ENCODE measurements at regions of chr20 and their contacts with region 1.

Region 1: DNA sequence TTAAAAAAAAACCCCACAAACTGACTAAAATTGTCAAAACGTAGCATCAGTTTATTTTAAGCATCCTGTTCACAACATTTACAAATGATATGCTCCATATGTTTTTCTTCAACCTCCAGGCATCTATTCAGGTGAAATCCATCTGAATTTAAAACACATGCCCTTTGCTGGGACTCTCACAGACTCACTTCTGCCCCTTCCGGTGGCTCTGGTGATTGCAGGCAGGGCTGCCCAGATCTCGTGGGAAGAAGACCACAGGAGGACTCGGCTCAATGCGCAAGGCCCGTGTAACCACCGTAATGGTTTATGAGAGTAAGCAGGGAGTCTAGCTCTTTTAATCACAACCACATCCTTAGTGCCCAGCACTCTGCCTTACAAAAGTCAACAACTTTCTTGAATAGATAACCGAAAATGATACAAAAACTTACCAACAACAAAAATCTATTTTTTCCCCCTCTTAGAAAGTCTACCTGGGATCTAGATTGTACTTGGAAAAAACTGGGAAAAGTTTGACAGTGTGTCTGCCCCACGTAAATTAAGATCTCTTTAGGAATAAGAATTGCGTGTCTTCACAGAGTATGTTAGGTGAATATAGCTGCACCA is 139.1 kb downstream of the KIF16B start:
- DNase-seq: peak; percentile 63
- ATAC-seq: peak; percentile 100
- H3K4me3 ChIP-seq: no peak overlapping the region
- H3K27ac ChIP-seq: no peak overlapping the region
- H3K4me1 ChIP-seq: no peaks in the 10 kb centered on the region
- H3K27me3 ChIP-seq: no peaks in the 10 kb centered on the region
- CTCF ChIP-seq: peak; percentile 65 to 87 (median 75)
- EP300 ChIP-seq: peak in 1 of 2 experiments; percentile 41; a peak in 1 of 4 replicates
- POLR2A ChIP-seq: no peak
- RAD21 ChIP-seq: peak; percentile 50

Region 2: DNA sequence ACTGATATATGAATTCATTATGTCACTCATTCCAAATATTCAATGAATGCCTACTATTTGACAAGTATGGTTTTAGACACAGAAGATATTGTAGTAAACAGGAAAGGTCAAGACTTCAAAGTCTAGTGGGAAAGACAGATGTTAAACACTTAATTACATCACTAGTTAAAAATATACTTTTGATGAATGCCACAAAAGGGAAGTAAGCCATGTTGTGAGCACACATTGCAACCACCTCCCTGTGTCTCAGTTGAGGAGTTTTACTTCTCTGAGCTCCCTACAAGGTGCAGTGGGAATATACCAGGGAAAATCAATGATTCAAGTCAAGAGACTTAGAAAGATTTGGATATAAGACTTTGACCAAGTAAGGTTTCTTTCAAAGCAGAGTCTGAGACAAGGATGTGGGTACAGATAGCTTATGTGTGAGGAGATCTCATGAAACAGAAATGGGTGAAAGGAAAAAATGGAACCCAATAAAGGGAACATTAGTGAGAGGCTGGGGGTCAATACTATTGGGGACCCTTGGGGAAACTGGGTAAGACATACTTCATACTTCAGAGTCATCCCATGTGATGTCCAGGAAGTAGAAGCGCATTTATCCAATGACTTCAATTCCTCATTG is 364.7 kb before region 1 on chr20:
- CTCF ChIA-PET with region 1: interaction called, 3 read pairs
- POLR2A ChIA-PET with region 1: no interaction called
- RAD21 ChIA-PET with region 1: no interaction called
- SMC1A ChIA-PET with region 1: no interaction called
- in situ Hi-C with region 1: no loop called
- intact Hi-C with region 1: loop called (anchors 10 kb)
- DNase-seq: peak; percentile 43
- ATAC-seq: peak; percentile 95
- H3K4me3 ChIP-seq: no peak overlapping the region
- H3K27ac ChIP-seq: no peak overlapping the region
- H3K4me1 ChIP-seq: no peaks in the 10 kb centered on the region; the same call in 1 of the 2 replicates
- H3K27me3 ChIP-seq: no peaks in the 10 kb centered on the region
- CTCF ChIP-seq: no peak
- EP300 ChIP-seq: peak; percentile 68 to 73; a peak in 2 of 4 replicates
- POLR2A ChIP-seq: no peak
- RAD21 ChIP-seq: no peak

Region 3: DNA sequence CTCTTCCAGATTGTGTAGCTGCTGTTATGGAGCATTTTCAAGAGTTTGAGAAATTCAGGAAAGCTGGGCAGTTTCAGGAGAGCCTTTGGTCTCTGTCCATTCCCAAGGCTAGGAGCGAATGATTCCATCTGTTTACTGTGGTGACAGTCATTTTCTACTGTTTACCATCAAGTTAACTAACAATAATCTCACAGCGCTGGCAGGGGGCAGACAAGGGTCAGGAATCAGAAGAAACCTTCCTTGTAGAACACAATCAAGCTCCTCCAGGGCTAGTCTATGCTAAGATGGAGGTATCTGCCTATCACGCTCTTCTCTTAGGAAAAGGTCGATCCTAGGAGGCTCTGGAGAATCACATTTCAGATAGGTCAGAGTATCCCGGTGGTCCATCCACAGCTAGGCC is 154.8 kb before region 1 on chr20:
- CTCF ChIA-PET with region 1: no interaction called
- POLR2A ChIA-PET with region 1: no interaction called
- RAD21 ChIA-PET with region 1: no interaction called
- SMC1A ChIA-PET with region 1: interaction called, 9 read pairs
- in situ Hi-C with region 1: no loop called
- intact Hi-C with region 1: loop called (anchors 5 kb)
- DNase-seq: no peak
- ATAC-seq: peak; percentile 46; the same call in 2 of the 3 replicates
- H3K4me3 ChIP-seq: no peak overlapping the region
- H3K27ac ChIP-seq: no peak overlapping the region
- H3K4me1 ChIP-seq: no peaks in the 10 kb centered on the region
- H3K27me3 ChIP-seq: no peaks in the 10 kb centered on the region
- CTCF ChIP-seq: peak in 2 of 3 experiments; percentile 17 to 41; a peak in 2 of 6 replicates
- EP300 ChIP-seq: no peak
- POLR2A ChIP-seq: no peak
- RAD21 ChIP-seq: peak; percentile 56

Region 4: GRCh38 chr20:16314320-16314719 is 119.8 kb before region 1 on chr20:
- CTCF ChIA-PET with region 1: no interaction called
- POLR2A ChIA-PET with region 1: no interaction called
- RAD21 ChIA-PET with region 1: no interaction called
- SMC1A ChIA-PET with region 1: interaction called, 4 read pairs
- in situ Hi-C with region 1: no loop called
- intact Hi-C with region 1: loop called (anchors 10 kb)
- DNase-seq: peak; percentile 69
- ATAC-seq: peak; percentile 78
- H3K4me3 ChIP-seq: peak overlapping the region; percentile 25; the same call in 1 of the 2 replicates
- H3K27ac ChIP-seq: no peak overlapping the region; the same call in 1 of the 2 replicates
- H3K4me1 ChIP-seq: peaks cover 21% of the 10 kb centered on the region
- H3K27me3 ChIP-seq: no peaks in the 10 kb centered on the region
- CTCF ChIP-seq: no peak
- EP300 ChIP-seq: no peak
- POLR2A ChIP-seq: no peak
- RAD21 ChIP-seq: no peak

Region 5: DNA sequence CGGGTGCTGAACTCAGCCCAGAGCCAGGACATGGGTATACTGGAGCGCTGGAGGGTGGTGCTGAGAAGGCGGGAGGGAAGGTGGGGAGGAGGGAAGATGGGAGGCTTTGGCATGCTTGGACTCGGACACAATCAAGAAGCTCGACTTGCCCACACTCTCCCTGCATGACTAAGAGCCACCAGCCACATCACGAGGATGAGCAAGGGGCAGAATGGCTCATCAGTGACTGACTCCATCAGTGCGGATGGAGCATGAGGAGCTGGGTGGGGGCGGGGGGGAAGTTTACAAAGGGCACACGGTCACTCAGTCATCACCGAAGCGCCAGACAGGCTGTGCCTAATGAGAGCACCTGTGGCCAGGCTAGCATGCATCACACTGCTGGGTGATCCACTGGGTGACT is 83.7 kb before region 1 on chr20:
- CTCF ChIA-PET with region 1: no interaction called
- POLR2A ChIA-PET with region 1: no interaction called
- RAD21 ChIA-PET with region 1: no interaction called
- SMC1A ChIA-PET with region 1: no interaction called
- in situ Hi-C with region 1: no loop called
- intact Hi-C with region 1: loop called (anchors 10 kb)
- DNase-seq: no peak
- ATAC-seq: no peak
- H3K4me3 ChIP-seq: no peak overlapping the region
- H3K27ac ChIP-seq: no peak overlapping the region
- H3K4me1 ChIP-seq: no peaks in the 10 kb centered on the region
- H3K27me3 ChIP-seq: no peaks in the 10 kb centered on the region
- CTCF ChIP-seq: no peak
- EP300 ChIP-seq: no peak
- POLR2A ChIP-seq: no peak
- RAD21 ChIP-seq: no peak